MCF 10A (cell line): ENCODE measurements at regions of chr11 and their contacts with region 1.

Region 1: DNA sequence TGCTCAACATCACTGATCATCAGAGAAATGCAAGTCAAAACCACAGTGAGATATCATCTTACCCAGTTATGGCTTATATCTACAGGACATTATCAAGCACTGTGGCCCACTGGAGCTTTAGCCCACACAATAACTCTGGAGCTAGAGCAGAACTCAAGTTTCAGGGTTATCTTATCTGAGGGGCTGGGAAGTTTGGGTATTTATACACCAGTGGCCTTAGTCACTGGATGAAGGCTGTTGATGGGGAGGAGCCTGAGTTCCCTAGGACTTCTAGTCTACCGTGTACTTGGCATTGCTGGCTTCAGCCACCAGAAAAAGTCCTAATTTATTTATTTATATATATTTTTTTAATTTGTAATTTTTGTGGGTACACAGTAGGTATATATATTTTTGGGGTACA is 19.3 kb downstream of the HSD17B12 start:
- DNase-seq: no peak
- H3K4me3 Mint-ChIP-seq: no peak overlapping the region
- H3K27ac Mint-ChIP-seq: no peak overlapping the region
- H3K4me1 Mint-ChIP-seq: no peaks in the 10 kb centered on the region
- H3K27me3 Mint-ChIP-seq: no peaks in the 10 kb centered on the region
- CTCF ChIP-seq: no peak

Region 2: DNA sequence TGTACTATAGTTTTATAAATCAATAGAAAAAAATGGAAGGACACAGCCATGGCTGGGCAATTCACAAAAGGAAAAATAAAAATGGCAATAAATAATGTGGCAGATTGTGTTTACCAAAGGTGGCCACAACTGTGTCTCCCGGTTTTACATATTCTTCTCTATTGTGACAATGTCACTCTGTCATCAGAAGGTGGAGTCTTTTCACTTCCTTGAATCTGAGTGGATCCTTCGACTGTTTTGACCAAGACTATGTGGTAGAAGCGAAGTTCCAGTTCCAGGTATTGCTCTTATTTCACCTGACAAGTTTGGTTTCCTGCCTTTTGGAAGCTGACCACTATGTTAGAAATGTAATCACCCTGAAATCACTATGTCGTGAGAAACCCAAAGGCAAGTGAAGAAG is 50.4 kb before region 1 on chr11:
- CTCF ChIA-PET with region 1: no interaction called
- POLR2A ChIA-PET with region 1: no interaction called
- intact Hi-C with region 1: no loop called
- DNase-seq: no peak
- H3K4me3 Mint-ChIP-seq: no peak overlapping the region
- H3K27ac Mint-ChIP-seq: no peak overlapping the region
- H3K4me1 Mint-ChIP-seq: no peaks in the 10 kb centered on the region
- H3K27me3 Mint-ChIP-seq: no peaks in the 10 kb centered on the region
- CTCF ChIP-seq: no peak

Region 3: GRCh38 chr11:43687120-43687791 is 12.6 kb before region 1 on chr11:
- CTCF ChIA-PET with region 1: no interaction called
- POLR2A ChIA-PET with region 1: interaction called, 13 read pairs
- intact Hi-C with region 1: no loop called
- DNase-seq: peak; percentile 69
- H3K4me3 Mint-ChIP-seq: peak overlapping the region; percentile 36
- H3K27ac Mint-ChIP-seq: peak overlapping the region; percentile 46
- H3K4me1 Mint-ChIP-seq: peaks cover 7% of the 10 kb centered on the region
- H3K27me3 Mint-ChIP-seq: no peaks in the 10 kb centered on the region
- CTCF ChIP-seq: no peak